Adrenal gland (tissue), 19 donors: ENCODE measurements at regions of chr1 and their contacts with region 1.

Region 1: DNA sequence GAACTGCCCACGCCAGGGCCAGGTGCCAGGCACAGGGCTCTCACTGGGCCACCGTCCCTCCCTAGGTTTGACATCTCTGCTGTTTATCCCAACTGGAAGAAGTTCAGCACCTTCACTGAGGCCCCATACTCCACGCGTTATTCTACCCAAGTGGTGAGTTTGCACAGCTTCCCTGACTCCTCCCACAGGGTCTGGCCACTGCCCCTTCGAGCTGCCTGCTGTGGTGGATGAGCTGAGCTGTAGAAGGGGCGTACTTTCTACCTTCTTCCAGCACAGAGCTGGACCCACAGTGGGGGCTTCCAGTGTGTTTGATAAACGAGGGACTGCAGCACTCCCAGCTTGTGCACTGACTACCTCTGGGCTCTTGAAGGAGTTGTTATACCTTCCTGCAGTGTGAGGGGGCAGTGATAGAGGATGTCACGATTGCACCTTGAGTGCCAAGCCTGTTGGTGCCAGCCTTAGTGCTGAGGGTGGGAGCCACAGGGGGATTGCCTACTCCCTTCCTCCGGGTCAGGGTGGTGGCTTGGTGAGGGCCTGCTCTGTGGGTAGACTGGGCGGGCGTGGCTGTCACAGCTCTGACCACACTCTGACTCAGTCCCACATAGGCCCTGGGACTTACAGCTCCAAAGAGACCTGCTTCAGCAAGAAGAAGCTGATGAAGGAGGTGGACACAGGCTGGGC is 5.9 kb upstream of the TTC22 start:
- DNase-seq: peak in 2 of 7 donors; percentile 17 to 33
- H3K4me3 ChIP-seq: no peak overlapping the region
- H3K27ac ChIP-seq: no peak overlapping the region
- H3K4me1 ChIP-seq: peaks cover 10 to 11% of the 10 kb centered on the region in 2 donors
- H3K27me3 ChIP-seq: no peaks in the 10 kb centered on the region
- CTCF ChIP-seq: no peak
- POLR2A ChIP-seq: no peak

Region 2: DNA sequence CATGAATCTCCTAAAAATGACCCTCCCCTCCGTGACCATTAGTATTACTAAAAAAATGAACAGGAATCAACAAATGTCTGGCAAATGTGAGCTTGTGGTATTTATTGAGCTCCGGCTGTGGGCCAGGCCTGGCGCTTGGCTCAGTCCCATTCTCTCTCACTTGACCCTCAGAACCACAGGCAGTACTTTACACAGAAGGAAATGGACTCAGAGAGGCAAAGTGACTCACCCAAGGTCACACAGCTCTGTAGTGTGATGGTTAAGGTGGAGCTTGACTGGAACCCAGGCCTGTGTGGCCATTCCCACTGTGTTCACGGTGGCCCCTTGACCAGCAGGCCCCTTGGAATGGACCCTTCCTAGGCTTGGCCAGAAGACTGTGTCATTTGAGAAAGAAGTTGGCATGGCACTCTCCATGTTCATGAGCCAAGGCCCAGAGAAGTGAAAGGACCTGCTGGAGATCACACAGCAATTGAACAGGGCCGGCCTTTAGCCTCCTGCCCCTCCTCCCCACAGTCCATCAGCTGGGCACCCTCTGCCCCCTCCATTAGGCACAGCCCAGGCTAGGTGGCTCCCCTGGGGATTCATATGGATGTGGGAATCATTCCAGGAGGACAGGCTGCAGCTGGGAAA is 215.8 kb before region 1 on chr1:
- intact Hi-C with region 1: no loop called
- DNase-seq: peak in 4 of 7 donors; percentile 31 to 63 (median 45)
- H3K4me3 ChIP-seq: no peak overlapping the region
- H3K27ac ChIP-seq: no peak overlapping the region
- H3K4me1 ChIP-seq: no peaks in the 10 kb centered on the region
- H3K27me3 ChIP-seq: no peaks in the 10 kb centered on the region
- CTCF ChIP-seq: no peak
- POLR2A ChIP-seq: no peak

Region 3: DNA sequence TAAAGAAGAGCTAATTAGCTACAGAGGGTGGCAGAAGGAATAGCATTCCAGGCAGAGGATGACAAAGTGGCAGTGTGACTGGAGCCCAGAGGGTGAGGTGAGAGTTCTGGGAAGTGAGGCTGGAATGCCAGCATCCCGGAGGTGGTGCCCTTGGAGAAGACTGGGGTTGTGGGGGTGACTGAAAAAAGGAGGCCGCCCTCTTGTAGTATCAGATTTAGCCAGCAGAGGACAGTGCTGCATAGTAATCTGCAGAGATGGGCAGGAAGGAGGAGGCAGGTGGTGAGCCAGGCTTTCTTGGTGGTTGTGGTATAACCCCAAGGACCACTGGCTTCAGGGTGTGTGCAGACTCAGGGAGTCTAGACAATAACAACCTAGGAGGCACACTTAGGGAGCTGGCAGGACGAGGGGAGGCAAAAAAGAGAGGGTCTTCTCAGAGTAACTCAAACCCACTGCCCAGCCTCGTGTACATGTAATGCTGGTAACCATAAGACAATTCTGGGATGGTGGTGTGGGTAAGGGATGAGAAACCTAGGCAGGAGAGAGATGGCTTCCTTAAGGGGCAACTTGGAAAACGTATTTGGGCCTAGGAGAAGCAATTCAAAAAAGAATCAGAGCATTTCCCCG is 135.0 kb before region 1 on chr1:
- intact Hi-C with region 1: loop called (anchors 2 to 5 kb)
- DNase-seq: peak; percentile 55 to 81 (median 64)
- H3K4me3 ChIP-seq: no peak overlapping the region
- H3K27ac ChIP-seq: no peak overlapping the region
- H3K4me1 ChIP-seq: no peaks in the 10 kb centered on the region
- H3K27me3 ChIP-seq: no peaks in the 10 kb centered on the region
- CTCF ChIP-seq: peak; percentile 69 to 98 (median 92)
- POLR2A ChIP-seq: no peak

Region 4: DNA sequence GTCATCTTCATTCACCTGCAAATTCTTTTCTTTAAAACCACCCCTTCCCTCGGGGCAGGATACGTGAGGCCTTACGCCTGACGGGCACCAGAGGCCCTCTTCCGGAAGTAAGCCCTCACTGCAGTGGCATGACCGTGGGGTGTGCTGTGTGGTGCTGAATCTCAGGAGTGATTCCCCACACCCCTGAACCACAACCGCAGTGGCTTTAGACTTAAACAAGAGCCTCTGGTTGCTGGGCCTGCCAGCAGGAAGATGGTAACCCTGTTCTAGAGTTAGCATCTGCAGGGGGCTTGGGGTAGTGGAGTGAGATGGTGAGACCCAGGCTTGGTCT is 203.8 kb after region 1 on chr1:
- intact Hi-C with region 1: no loop called
- DNase-seq: no peak
- H3K4me3 ChIP-seq: no peak overlapping the region
- H3K27ac ChIP-seq: no peak overlapping the region
- H3K4me1 ChIP-seq: no peaks in the 10 kb centered on the region
- H3K27me3 ChIP-seq: peaks cover 7% of the 10 kb centered on the region
- CTCF ChIP-seq: no peak
- POLR2A ChIP-seq: no peak